ENCODE measurements at regions of chr4 and their contacts with region 1.

Region 1: GRCh38 chr4:143538979-143539669 is 25.6 kb downstream of the SMARCA5 start:
- DNase-seq: no peak
- ATAC-seq: no peak
- H3K4me3 ChIP-seq: no peak overlapping the region
- H3K27ac ChIP-seq: no peak overlapping the region
- H3K4me1 ChIP-seq: no peaks in the 10 kb centered on the region
- H3K27me3 ChIP-seq: no peaks in the 10 kb centered on the region
- CTCF ChIP-seq: no peak
- POLR2A ChIP-seq: no peak
- RAD21 ChIP-seq: no peak

Region 2: DNA sequence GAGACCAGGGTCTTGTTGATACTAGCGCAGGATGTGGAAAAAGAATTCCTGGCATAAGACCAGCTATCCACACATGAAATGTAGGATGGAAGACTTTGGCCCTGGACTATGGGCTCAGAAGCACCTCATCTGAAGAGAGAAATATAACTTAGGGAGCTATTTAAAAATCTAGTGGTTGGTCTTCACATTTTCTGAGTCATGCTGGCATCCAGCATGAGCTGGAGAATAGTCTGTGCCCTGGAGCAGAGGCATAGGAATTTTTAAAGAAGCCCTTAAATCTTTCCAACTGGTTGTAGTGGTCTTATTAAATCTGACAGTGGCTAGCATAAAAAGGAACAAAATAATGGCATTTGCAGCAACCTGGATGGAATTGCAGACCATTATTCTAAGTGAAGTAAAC is 60.7 kb after region 1 on chr4:
- CTCF ChIA-PET with region 1: no interaction called
- POLR2A ChIA-PET with region 1: no interaction called
- dilution Hi-C with region 1: no loop called
- in situ Hi-C with region 1: no loop called
- intact Hi-C with region 1: no loop called
- DNase-seq: no peak
- ATAC-seq: no peak
- H3K4me3 ChIP-seq: no peak overlapping the region
- H3K27ac ChIP-seq: no peak overlapping the region
- H3K4me1 ChIP-seq: no peaks in the 10 kb centered on the region
- H3K27me3 ChIP-seq: no peaks in the 10 kb centered on the region
- CTCF ChIP-seq: no peak
- POLR2A ChIP-seq: no peak
- RAD21 ChIP-seq: no peak

Region 3: GRCh38 chr4:143626134-143626911 is 87.2 kb after region 1 on chr4:
- CTCF ChIA-PET with region 1: no interaction called
- POLR2A ChIA-PET with region 1: no interaction called
- dilution Hi-C with region 1: no loop called
- in situ Hi-C with region 1: no loop called
- intact Hi-C with region 1: no loop called
- DNase-seq: no peak
- ATAC-seq: no peak
- H3K4me3 ChIP-seq: no peak overlapping the region
- H3K27ac ChIP-seq: no peak overlapping the region
- H3K4me1 ChIP-seq: no peaks in the 10 kb centered on the region
- H3K27me3 ChIP-seq: no peaks in the 10 kb centered on the region
- CTCF ChIP-seq: no peak
- POLR2A ChIP-seq: no peak
- RAD21 ChIP-seq: no peak

Region 4: DNA sequence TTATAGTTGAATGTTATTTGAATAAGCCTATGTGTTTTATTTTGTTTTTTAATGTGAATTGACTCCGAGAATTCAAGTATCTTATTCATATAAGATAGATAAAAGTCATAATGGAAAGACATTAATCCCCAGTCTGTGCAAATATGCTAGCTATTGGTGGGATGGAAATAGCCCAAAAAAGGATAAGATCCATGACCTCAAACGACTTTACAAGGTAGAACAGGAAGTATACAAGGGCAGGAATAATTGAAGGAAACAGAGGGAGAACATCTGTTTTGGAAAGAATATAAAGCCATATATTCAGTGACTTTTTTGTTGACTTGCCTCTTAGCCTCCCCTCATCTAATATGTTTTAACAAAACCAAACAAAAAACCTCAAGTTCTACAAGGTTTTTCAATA is 1568.0 kb after region 1 on chr4:
- CTCF ChIA-PET with region 1: no interaction called
- POLR2A ChIA-PET with region 1: no interaction called
- dilution Hi-C with region 1: no loop called
- in situ Hi-C with region 1: loop called (anchors 25 kb)
- intact Hi-C with region 1: loop called (anchors 10 kb)
- DNase-seq: no peak
- ATAC-seq: no peak
- H3K4me3 ChIP-seq: no peak overlapping the region
- H3K27ac ChIP-seq: no peak overlapping the region
- H3K4me1 ChIP-seq: no peaks in the 10 kb centered on the region
- H3K27me3 ChIP-seq: no peaks in the 10 kb centered on the region
- CTCF ChIP-seq: no peak
- POLR2A ChIP-seq: no peak
- RAD21 ChIP-seq: no peak

Measured in IMR-90 (cell line).